Caco-2 (cell line): ENCODE measurements at regions of chr10 and their contacts with region 1.

Region 1: GRCh38 chr10:116521404-116522290 is 24.1 kb upstream of the PNLIP start:
- DNase-seq: peak in 1 of 2 experiments; percentile 38
- H3K4me3 ChIP-seq: no peak overlapping the region
- H3K4me3 Mint-ChIP-seq: no peak overlapping the region
- H3K27ac Mint-ChIP-seq: no peak overlapping the region
- H3K4me1 ChIP-seq: no peaks in the 10 kb centered on the region
- H3K4me1 Mint-ChIP-seq: no peaks in the 10 kb centered on the region
- H3K27me3 ChIP-seq: no peaks in the 10 kb centered on the region; the same call in 1 of the 2 replicates
- H3K27me3 Mint-ChIP-seq: peaks cover 9% of the 10 kb centered on the region
- CTCF ChIP-seq: peak; percentile 69 to 73

Region 2: DNA sequence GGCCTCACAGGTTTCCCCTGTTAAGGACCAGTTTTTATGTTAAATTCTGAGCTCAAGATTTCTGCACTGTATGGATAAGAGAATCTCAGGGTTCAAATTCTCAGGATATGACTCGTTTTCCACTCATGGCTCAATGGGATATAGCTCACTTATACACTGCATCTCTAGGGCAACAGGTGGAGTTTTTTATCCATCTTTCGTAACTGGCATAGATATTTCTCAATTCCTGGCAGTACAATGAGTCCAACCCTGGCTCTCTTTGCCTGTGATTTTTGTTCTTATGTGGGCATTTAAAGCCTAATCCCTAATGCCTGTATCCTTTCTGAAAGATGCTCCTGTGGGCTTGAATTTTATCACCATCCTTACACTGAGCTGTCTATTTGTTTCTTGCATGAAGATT is 189.8 kb before region 1 on chr10:
- CTCF ChIA-PET with region 1: no interaction called
- POLR2A ChIA-PET with region 1: no interaction called
- intact Hi-C with region 1: no loop called
- DNase-seq: no peak
- H3K4me3 ChIP-seq: no peak overlapping the region
- H3K4me3 Mint-ChIP-seq: no peak overlapping the region
- H3K27ac Mint-ChIP-seq: no peak overlapping the region
- H3K4me1 ChIP-seq: no peaks in the 10 kb centered on the region
- H3K4me1 Mint-ChIP-seq: peaks cover 6% of the 10 kb centered on the region
- H3K27me3 ChIP-seq: no peaks in the 10 kb centered on the region
- H3K27me3 Mint-ChIP-seq: peaks cover 5% of the 10 kb centered on the region
- CTCF ChIP-seq: no peak

Region 3: DNA sequence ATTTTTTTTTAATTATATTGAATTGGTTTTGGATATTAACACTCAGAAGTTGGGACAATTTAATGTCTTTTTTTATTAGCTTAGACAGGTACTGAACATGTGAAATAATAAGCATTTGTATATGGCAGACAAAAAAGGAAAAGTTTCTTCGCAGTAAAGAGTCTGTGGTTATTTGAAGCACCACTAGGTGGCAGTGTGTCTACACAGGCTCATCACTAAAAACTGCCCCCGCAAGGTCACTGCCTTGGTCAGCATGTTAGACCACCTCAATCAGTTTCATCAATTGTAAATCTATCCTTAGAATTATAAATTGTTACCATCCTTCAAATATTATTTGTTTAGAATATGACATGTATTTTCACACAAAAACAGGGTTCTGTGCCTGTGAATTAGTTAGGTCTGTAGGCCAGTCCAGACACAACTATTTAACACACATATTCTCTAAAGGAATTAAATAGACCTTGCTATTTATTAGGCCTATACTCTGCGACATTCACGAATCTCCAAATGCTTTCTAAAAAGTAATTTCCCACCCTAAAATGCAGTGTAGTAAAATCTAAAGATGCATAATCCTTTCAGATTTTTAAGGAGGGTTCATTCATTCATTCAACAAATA is 77.0 kb before region 1 on chr10:
- CTCF ChIA-PET with region 1: no interaction called
- POLR2A ChIA-PET with region 1: no interaction called
- intact Hi-C with region 1: loop called (anchors 1 kb)
- DNase-seq: peak in 1 of 2 experiments; percentile 43
- H3K4me3 ChIP-seq: no peak overlapping the region
- H3K4me3 Mint-ChIP-seq: no peak overlapping the region
- H3K27ac Mint-ChIP-seq: no peak overlapping the region
- H3K4me1 ChIP-seq: no peaks in the 10 kb centered on the region
- H3K4me1 Mint-ChIP-seq: no peaks in the 10 kb centered on the region
- H3K27me3 ChIP-seq: no peaks in the 10 kb centered on the region
- H3K27me3 Mint-ChIP-seq: peaks cover 17% of the 10 kb centered on the region
- CTCF ChIP-seq: peak; percentile 84 to 86

Region 4: DNA sequence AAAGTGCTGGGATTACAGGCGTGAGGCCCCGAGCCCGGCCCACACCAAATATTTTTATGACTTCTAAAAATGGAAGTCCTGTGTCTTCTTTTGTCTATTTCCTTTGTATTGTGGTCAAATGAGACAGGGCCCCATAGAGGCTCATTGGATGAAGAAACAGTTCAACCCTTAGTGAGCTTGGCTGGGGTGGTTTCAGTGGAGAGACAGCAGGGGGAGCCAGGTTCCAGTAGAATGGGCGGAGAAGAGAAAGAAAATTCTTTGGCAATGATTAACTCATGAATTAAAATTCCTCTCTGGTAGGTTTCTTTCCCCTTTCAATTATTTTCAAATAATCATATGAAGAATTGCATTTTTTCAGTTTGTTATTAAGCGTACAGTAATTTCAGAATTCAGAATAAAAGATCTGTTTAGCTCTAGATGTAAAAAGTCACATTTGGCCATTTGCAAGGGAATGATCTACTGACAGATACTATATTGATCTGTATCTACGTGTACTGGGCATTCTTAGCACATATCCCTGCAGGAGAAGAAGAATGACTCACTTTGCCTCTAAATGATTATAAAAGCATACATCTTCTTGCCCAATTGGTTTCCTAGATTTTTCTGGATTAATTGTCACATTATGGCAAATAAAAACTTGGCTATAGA is 50.8 kb before region 1 on chr10:
- CTCF ChIA-PET with region 1: no interaction called
- POLR2A ChIA-PET with region 1: no interaction called
- intact Hi-C with region 1: loop called (anchors 1 kb)
- DNase-seq: peak; percentile 47 to 49
- H3K4me3 ChIP-seq: no peak overlapping the region
- H3K4me3 Mint-ChIP-seq: no peak overlapping the region
- H3K27ac Mint-ChIP-seq: no peak overlapping the region
- H3K4me1 ChIP-seq: 0 out of 2 replicates have a peak, but pooled peaks cover 6% of the 10 kb centered on the region
- H3K4me1 Mint-ChIP-seq: peaks cover 13% of the 10 kb centered on the region
- H3K27me3 ChIP-seq: no peaks in the 10 kb centered on the region
- H3K27me3 Mint-ChIP-seq: peaks cover 3% of the 10 kb centered on the region
- CTCF ChIP-seq: peak; percentile 38 to 67

Region 5: GRCh38 chr10:116504786-116505185 is 16.9 kb before region 1 on chr10:
- CTCF ChIA-PET with region 1: no interaction called
- POLR2A ChIA-PET with region 1: no interaction called
- intact Hi-C with region 1: no loop called
- DNase-seq: no peak
- H3K4me3 ChIP-seq: no peak overlapping the region
- H3K4me3 Mint-ChIP-seq: no peak overlapping the region
- H3K27ac Mint-ChIP-seq: no peak overlapping the region
- H3K4me1 ChIP-seq: no peaks in the 10 kb centered on the region
- H3K4me1 Mint-ChIP-seq: no peaks in the 10 kb centered on the region
- H3K27me3 ChIP-seq: no peaks in the 10 kb centered on the region
- H3K27me3 Mint-ChIP-seq: peaks cover 27% of the 10 kb centered on the region
- CTCF ChIP-seq: no peak